Ovary (tissue), 10 donors: ENCODE measurements at regions of chr1 and their contacts with region 1.

Region 1: DNA sequence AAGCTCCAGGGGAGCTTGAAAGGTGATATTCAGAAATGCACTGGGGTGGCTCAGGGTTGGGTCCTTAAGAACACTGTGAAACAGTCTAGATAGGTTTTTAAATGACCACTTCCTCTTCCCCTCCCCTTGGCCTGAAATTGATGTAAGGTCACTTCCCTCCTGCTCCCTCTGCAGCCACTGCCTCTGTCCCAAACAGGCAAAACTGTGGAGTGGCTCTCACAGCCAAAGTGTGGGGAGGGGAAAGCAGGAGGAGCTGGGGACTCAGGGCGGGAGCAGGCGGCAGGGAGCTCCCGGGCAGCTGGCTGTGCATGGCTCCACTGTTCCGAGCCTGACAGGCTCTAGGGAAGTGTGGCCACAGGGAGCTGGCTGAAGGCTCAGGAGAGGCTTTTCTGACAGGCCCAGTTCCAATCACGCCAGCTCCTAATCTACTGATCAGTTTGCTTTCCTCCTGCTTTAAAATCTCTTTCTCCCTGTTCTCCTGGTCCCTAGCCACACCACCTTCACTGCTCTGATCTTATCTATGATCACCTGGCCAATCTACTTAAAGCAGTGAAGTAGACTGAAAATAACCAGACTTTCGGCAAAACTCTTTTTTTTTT is 5.1 kb upstream of the CSRP1 start:
- DNase-seq: peak in 2 of 5 donors; percentile 38 to 44
- H3K4me3 ChIP-seq: no peak overlapping the region
- H3K27ac ChIP-seq: no peak overlapping the region
- H3K4me1 ChIP-seq: no peaks in the 10 kb centered on the region
- H3K27me3 ChIP-seq: no peaks in the 10 kb centered on the region
- CTCF ChIP-seq: no peak
- EP300 ChIP-seq: no peak
- POLR2A ChIP-seq: no peak

Region 2: DNA sequence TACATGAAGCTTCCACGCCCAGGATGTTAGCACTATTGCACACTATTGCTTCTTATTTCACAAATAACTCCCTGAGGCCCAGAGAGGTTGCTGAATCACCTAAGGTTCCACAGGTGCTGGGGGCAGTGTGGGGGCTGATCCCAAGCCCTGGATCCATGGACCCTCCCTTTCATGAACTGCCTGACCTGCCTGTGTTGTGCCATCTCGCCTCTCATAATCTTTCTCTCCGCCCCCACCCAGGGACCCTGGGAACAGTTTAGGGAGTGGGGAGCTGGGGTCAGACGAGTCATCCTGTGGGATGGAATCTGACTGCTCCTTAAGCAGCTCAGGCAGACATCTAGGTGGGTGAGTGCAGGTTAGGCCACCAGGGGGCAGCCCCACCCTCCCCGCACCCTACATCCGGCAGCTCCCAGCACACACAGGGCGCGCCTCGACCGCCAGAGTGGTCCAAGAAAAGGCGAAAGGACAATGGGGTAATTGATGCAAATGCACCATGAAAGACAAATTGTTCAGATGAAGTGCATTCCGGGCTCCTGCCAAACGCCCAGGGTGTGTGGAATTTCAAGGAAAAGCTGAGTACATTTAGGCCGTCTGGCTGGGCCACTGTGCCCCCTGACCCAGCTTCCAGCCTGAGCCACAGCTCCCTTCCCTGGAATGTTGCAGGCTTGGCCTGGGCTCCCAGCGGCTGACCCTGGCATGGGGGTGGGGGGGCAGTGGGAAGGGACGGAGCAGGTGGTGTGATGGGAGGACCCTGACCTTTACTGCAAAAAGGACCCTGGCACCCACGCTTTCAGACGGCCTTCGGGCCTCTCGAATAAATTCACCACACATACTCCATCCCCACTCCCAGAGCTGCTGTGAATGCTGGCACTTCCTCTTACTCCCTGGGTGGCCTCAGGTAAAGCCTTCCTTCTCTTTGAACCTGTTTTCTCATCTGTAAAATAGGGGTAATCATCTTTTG is 63.8 kb before region 1 on chr1:
- intact Hi-C with region 1: loop called in 1 of 4 experiments (anchors 10 kb)
- DNase-seq: peak; percentile 44 to 79 (median 67)
- H3K4me3 ChIP-seq: no peak overlapping the region
- H3K27ac ChIP-seq: no peak overlapping the region
- H3K4me1 ChIP-seq: peaks cover 11% of the 10 kb centered on the region
- H3K27me3 ChIP-seq: no peaks in the 10 kb centered on the region
- CTCF ChIP-seq: peak; percentile 25 to 56 (median 50)
- EP300 ChIP-seq: no peak
- POLR2A ChIP-seq: no peak

Region 3: DNA sequence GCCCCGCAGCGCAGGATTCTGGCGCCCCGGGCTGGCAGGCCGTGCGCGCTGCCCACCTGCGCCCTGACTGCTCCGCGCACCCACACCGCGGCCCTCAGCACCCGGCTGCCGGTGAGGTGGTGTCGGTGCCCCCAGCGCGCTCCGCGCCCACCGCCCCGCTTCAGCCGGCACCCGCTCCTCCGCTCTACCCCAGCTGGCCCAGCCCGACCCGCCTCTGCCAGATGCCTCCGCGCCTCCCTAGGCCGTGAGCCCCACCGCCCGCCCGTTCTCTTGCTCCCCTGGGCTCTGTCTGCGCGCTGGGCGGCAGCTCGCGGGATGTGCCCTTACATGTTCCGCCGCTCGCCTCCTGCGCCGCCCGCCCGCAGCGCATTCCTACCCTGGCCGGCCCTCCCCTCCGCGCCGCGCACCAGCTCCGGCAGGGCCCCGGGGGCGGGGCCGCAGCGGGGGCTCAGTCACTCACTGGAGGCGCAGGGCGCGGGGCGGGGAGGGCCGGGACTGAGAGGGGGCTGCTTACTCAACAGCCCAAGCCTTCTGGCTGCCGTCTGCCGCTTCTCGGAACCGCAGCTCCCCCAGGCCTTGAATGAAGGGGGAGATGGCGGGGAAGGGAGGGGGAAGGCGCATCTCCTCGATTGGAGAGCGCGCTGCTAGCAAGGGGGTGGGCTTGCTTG is 43.1 kb before region 1 on chr1 and contains the start of gene PHLDA3:
- intact Hi-C with region 1: loop called in 1 of 4 experiments (anchors 10 kb)
- DNase-seq: peak; percentile 91 to 94 (median 92)
- H3K4me3 ChIP-seq: peak within 1 kb of the TSS; percentile 83
- H3K27ac ChIP-seq: peak within 1 kb of the TSS; percentile 79 to 92
- H3K4me1 ChIP-seq: peaks cover 8% of the 10 kb centered on the region
- H3K27me3 ChIP-seq: no peaks in the 10 kb centered on the region
- CTCF ChIP-seq: peak in 1 of 3 donors; percentile 18
- EP300 ChIP-seq: no peak
- POLR2A ChIP-seq: peak; percentile 70
- total RNA-seq, gene PHLDA3: 21.7 to 38.2 (median 29.0) TPM

Region 4: GRCh38 chr1:201481761-201482493 is 30.1 kb before region 1 on chr1:
- intact Hi-C with region 1: loop called (anchors 2 kb)
- DNase-seq: peak; percentile 81 to 92 (median 91)
- H3K4me3 ChIP-seq: peak overlapping the region; percentile 9
- H3K27ac ChIP-seq: peak overlapping the region in 1 of 2 donors; percentile 9
- H3K4me1 ChIP-seq: no peaks in the 10 kb centered on the region
- H3K27me3 ChIP-seq: no peaks in the 10 kb centered on the region
- CTCF ChIP-seq: peak; percentile 87 to 98 (median 98)
- EP300 ChIP-seq: no peak
- POLR2A ChIP-seq: peak; percentile 16

Region 5: DNA sequence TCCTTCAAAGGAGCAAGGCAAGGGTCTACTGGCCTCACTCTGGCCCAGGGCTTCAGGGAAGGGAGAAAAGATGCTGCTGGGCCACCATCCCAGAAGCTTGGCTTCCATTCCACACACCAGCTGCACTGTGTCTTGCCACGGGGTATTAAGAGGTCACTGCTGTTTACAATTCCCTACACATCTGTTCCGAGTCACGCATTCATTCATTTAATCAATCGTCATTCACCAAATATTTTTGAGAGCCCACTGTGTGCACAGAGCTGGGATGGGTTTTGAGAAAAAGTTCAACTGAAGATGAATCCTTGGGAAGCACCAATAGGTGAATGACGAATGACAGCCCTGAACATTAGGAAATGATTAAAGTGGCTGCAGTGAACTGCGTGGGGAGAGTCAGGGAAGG is 128.6 kb after region 1 on chr1:
- intact Hi-C with region 1: no loop called
- DNase-seq: peak; percentile 37 to 76 (median 66)
- H3K4me3 ChIP-seq: no peak overlapping the region
- H3K27ac ChIP-seq: no peak overlapping the region
- H3K4me1 ChIP-seq: peaks cover 7% of the 10 kb centered on the region
- H3K27me3 ChIP-seq: no peaks in the 10 kb centered on the region
- CTCF ChIP-seq: no peak
- EP300 ChIP-seq: no peak
- POLR2A ChIP-seq: no peak